Sciatic nerve (tissue), 2 donors: ENCODE measurements at regions of chr3 and their contacts with region 1.

Region 1: DNA sequence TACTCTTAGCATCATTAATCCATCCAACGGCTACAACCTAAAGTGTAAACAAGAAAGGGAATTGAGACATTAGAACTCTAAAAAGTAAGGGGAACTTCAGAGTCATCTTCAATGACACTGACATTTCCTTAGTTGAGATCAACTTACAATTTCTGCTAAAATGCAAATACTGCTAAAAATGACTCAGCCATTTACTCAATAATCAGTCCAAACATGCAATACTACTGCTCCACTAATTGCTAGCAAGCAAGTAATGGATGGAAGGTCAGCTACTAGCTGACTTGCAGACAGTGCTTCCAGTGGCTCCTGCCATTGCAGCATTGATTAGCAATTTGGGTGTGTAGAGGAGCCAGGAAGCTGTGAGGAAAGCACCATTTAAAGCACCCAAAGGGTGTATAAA is 28.4 kb downstream of the CD200R1L start:
- DNase-seq: no peak
- ATAC-seq: no peak

Region 2: GRCh38 chr3:112061152-112061551 is 757.1 kb before region 1 on chr3:
- intact Hi-C with region 1: no loop called
- DNase-seq: no peak
- ATAC-seq: no peak

Region 3: DNA sequence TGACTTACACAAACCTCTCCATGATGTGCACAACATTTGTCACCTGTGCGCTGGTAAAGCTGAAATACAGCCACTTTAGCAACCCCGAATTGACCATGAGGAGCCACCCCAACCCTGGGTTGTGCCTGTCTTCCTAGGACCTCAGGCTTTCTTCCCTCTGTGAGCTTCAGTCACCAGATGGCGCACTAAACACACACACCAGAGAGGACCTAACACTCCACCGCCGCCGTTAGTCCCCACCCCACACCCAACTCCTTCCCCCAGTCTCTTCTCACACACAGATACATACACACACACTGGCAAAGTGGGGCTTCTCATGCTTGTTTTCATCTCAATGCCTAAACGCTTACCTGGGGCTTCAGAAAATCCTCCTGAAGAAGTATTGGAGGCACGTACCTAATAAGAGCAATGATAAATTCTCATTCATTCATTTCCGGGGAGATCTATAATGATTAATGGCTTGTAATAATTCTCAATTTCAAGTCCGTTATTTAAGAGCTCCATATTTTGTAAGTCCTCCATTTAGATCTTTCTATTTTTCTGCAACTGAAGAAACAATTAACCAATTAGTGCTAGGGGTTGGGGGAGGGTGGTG is 175.3 kb before region 1 on chr3:
- intact Hi-C with region 1: loop called (anchors 5 kb)
- DNase-seq: peak; percentile 91
- ATAC-seq: peak; percentile 82

Region 4: DNA sequence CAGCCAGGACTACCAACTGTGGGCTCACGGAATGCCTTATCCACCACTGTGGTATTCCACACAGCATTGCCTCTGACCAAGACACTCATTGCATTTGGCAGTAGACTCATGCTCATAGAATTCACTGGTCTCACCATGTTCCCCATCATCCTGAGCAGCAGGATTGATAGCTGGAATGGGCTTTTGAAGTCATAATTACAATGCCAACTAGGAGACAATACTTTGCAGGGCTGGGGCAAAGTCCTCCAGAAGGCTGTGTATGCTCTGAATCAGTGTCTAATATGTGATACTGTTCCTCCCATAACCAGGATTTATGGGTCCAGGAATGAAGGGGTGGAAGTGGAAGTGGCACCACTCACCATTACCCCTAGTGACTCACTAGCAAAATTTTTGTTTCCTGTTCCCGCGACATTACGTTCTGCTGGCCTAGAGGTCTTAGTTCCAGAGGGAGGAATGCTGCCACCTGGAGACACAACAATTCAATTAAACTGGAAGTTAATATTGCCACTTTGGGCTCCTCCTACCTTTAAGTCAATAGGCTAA is 118.8 kb before region 1 on chr3:
- intact Hi-C with region 1: no loop called
- DNase-seq: no peak
- ATAC-seq: no peak